Ascending aorta (tissue), 2 donors: ENCODE measurements at regions of chr9 and their contacts with region 1.

Region 1: DNA sequence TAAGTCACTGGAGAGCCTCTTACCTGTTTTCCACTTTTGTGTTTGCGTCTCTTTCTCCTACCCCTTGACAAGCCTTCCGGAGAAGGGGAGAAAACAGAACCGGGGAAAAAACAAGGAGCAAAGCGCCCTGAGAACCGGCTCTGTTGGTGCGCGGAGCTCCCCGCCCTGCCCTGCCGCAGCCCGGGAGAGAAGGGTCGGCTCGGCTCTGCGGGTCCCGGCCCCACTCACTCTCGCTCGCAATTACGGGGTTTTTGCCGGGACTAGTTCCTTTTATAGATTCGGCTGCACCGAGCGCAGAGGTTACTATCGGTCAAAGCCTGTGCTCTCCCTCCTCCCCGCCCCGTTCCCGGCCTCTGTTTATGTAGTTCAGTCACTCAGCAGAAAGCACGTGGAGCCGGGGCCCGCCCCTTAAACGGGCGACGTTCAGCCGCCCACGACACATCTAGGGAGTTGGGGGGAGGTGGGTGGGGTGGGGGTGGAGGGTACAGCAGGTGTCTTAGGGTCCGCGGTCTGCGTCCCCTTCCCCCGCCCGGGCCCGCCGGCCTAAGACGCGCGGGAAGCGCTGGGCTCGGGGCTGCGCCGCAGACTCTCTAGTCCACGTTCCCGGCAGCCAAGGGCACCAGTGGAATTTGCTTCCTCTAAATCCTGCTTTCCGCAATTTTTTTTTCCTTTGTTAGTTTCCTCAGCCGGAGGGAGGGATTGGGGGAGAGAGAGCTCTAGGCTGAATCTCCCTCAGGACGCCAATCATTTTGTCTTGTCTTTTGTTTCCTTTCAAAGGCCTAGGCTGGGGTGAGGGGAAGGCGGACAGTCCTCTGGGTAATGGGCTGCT is at the start of gene ABCA1:
- DNase-seq: peak; percentile 82 to 95
- H3K4me3 ChIP-seq: peak within 1 kb of the TSS; percentile 69 to 90
- H3K27ac ChIP-seq: peak within 1 kb of the TSS; percentile 70 to 81
- H3K4me1 ChIP-seq: peaks cover 0 to 5% of the 10 kb centered on the region in 2 donors
- H3K27me3 ChIP-seq: no peaks in the 10 kb centered on the region
- CTCF ChIP-seq: no peak
- total RNA-seq, gene ABCA1: 14.0 TPM

Region 2: DNA sequence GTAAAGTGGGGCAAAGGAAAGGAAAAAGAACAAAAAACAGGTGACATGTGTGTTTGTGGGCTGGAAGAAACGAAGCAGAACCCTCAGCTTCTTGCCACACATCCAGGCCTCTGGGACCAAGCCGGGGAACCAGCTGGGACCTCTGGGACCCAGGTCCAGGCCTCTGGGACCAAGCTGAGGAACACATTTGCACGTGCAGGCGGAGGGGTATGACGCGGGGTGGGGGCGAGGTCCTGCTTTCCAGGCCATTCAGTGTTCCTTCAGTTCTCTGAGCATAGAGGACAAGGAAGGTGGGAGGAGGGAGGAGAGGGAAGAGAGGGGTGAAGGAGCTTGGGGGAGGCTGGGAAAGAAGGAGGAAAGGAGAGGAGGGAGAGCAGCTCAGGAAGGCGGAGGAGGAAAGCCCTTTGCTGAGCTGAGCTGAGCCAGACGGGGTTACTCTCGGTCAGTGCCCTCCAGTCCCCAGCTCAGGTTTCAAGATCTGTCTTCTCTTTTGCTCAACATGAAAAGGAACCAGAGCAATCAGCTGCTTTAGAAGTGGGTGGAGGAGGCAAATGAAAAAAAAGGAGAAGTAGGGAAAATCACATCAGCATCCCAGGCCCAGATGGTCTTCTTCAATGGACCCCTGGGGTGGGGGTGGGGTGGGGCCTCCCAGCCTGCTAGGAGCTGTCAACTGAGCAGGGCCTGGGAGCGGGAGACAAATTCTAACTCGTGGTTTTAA is 59.3 kb before region 1 on chr9:
- intact Hi-C with region 1: no loop called
- DNase-seq: peak; percentile 31 to 69
- H3K4me3 ChIP-seq: no peak overlapping the region
- H3K27ac ChIP-seq: peak overlapping the region; percentile 27 to 34
- H3K4me1 ChIP-seq: peaks cover 0 to 17% of the 10 kb centered on the region in 2 donors
- H3K27me3 ChIP-seq: no peaks in the 10 kb centered on the region
- CTCF ChIP-seq: no peak

Region 3: GRCh38 chr9:104968025-104968982 is 40.2 kb after region 1 on chr9:
- intact Hi-C with region 1: loop called (anchors 1 kb)
- DNase-seq: peak; percentile 41 to 95
- H3K4me3 ChIP-seq: peak overlapping the region; percentile 69 to 78
- H3K27ac ChIP-seq: peak overlapping the region; percentile 86 to 94
- H3K4me1 ChIP-seq: peaks cover 0 to 4% of the 10 kb centered on the region in 2 donors
- H3K27me3 ChIP-seq: no peaks in the 10 kb centered on the region
- CTCF ChIP-seq: no peak

Region 4: GRCh38 chr9:104982543-104982942 is 54.4 kb after region 1 on chr9:
- intact Hi-C with region 1: no loop called
- DNase-seq: no peak
- H3K4me3 ChIP-seq: no peak overlapping the region
- H3K27ac ChIP-seq: no peak overlapping the region
- H3K4me1 ChIP-seq: no peaks in the 10 kb centered on the region
- H3K27me3 ChIP-seq: no peaks in the 10 kb centered on the region
- CTCF ChIP-seq: no peak

Region 5: DNA sequence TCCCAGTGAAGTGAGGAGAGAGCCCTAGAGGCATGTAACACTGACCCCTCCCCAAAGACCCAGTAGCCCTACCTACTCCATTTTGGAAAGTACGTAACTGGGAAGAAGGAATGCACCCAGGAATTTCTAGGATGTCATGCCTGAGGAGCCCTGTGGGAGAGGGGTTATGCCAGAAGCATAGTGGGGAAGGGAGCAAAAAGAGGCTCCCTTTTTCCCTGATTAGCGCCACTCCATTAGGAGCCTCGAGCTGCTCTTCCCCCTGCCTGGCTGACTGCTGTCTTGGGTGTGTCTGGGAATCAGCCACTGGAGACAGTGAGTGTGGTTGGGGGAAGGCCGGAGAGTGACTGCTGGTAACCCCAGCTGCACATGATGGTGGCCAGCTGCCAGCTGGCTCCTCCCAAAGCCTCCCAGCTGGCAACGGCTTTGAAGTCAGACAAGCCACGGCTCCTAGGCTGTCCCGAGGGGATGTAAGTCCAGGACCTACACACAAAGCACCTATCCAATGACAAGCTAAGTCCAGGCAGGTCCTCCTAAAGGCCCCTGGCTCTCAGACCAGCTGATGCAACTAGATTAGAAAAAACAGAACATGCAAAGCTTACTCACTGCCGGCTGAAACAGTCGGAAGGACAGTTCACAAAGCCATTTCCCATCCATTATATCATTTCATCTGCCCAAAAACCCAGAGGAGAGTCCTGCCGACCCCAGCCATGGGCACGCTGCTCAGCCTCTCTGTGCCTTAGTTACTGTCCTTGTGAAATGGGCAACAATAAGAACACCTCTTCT is 136.4 kb after region 1 on chr9:
- intact Hi-C with region 1: loop called (anchors 2 kb)
- DNase-seq: peak; percentile 67 to 90
- H3K4me3 ChIP-seq: no peak overlapping the region
- H3K27ac ChIP-seq: peak overlapping the region; percentile 88 to 92
- H3K4me1 ChIP-seq: peaks cover 11 to 16% of the 10 kb centered on the region in 2 donors
- H3K27me3 ChIP-seq: no peaks in the 10 kb centered on the region
- CTCF ChIP-seq: no peak

Region 6: DNA sequence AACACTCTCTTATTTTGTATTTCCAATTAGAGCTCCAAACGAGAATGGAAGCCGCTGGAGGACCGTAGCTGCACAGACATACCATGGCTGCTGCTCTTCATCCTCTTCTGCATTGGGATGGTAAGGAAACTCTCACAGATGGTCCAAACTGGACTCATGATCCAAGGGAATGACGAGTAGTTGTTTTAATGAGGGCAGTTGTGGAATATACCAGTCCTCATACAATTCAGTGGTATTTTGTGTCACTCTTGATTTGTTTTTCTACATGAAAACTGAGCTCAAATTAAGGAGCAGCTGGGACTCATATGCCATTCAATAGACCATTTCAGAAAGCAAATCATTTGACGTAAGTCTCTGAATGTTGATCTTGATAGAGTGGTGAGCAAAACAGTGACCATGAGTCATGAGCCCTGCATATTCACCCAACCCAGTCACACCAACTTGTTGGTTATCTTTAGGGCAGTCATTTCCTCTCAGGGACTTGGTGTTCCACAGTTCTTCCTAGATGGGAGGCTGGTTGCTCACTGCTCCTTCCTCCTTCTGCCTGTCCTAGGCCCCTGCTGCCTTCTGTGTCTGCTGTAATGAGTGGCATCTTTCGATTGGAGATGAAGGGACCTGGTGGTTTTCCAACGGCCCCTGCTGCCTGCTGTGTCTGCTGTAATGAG is 371.2 kb after region 1 on chr9:
- intact Hi-C with region 1: loop called (anchors 5 kb)
- DNase-seq: peak; percentile 13 to 71
- H3K4me3 ChIP-seq: no peak overlapping the region
- H3K27ac ChIP-seq: peak overlapping the region; percentile 76 to 79
- H3K4me1 ChIP-seq: peaks cover 9 to 30% of the 10 kb centered on the region in 2 donors
- H3K27me3 ChIP-seq: no peaks in the 10 kb centered on the region
- CTCF ChIP-seq: no peak

Region 7: GRCh38 chr9:105414947-105415661 is 487.0 kb after region 1 on chr9:
- intact Hi-C with region 1: loop called (anchors 1 kb)
- DNase-seq: peak in 1 of 2 donors; percentile 69
- H3K4me3 ChIP-seq: no peak overlapping the region
- H3K27ac ChIP-seq: no peak overlapping the region
- H3K4me1 ChIP-seq: no peaks in the 10 kb centered on the region
- H3K27me3 ChIP-seq: no peaks in the 10 kb centered on the region
- CTCF ChIP-seq: peak; percentile 80 to 89 (median 81)